A673 (cell line): ENCODE measurements at regions of chr14 and their contacts with region 1.

Region 1: DNA sequence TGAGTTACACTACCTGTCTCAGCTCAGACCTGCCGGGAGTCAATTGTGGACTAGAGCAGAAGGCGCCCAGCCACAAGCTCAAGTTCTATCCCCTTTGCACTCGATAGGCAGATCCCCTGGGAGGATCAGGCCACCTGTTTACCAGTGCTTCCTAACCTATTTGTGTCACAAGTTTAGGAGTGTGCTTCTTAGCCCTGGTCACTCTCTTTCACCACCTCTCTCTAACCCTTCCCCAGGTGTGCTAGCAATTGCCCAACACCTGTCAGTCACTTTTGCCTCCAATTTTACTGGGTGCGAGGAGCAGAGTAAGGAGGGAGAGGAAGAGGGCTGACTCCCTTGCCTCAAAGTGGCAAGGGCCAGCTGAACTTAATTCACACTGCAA is 749 bp upstream of the NAA30 start:
- DNase-seq: no peak
- H3K4me3 ChIP-seq: peak overlapping the region; percentile 87
- H3K27ac ChIP-seq: peak overlapping the region; percentile 87
- H3K4me1 ChIP-seq: peaks cover 15% of the 10 kb centered on the region
- H3K27me3 ChIP-seq: no peaks in the 10 kb centered on the region
- CTCF ChIP-seq: no peak

Region 2: DNA sequence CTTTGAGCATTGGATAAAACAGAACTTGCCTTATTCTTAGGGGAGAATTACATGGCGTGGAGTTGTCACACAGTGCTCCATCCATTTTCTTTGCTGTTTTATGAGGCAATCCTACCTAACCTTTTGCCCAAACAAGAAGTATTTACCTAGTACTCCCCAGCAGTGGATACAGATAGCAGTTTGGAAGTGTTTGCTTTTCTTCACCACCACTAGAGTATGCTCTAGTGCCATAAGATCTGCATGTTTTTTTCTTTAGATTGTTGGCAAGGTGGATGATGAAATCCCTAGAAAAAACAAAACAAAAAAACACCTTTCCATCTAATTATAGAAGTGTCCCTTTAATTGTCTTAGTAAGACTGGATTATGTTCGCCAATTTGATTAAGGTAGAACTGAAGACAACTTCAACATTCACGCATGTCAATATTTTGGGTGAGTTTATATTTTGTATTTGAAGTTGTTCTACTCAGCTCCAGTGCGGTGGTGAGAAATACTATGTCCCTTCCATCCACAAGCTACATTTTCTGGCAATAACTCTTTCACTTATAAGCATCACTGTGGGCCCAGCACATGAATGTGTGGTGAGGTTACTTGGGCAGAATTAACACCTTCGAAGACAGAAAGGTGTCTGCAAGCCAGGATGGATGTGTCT is 833.6 kb before region 1 on chr14:
- CTCF ChIA-PET with region 1: no interaction called
- POLR2A ChIA-PET with region 1: no interaction called
- intact Hi-C with region 1: no loop called
- DNase-seq: peak; percentile 81
- H3K4me3 ChIP-seq: no peak overlapping the region
- H3K27ac ChIP-seq: peak overlapping the region; percentile 48
- H3K4me1 ChIP-seq: peaks cover 44% of the 10 kb centered on the region
- H3K27me3 ChIP-seq: no peaks in the 10 kb centered on the region
- CTCF ChIP-seq: peak; percentile 85

Region 3: GRCh38 chr14:57182760-57183503 is 206.7 kb before region 1 on chr14:
- CTCF ChIA-PET with region 1: no interaction called
- POLR2A ChIA-PET with region 1: no interaction called
- intact Hi-C with region 1: loop called (anchors 10 kb)
- DNase-seq: peak; percentile 76
- H3K4me3 ChIP-seq: no peak overlapping the region
- H3K27ac ChIP-seq: no peak overlapping the region
- H3K4me1 ChIP-seq: peaks cover 7% of the 10 kb centered on the region
- H3K27me3 ChIP-seq: no peaks in the 10 kb centered on the region
- CTCF ChIP-seq: peak; percentile 78

Region 4: DNA sequence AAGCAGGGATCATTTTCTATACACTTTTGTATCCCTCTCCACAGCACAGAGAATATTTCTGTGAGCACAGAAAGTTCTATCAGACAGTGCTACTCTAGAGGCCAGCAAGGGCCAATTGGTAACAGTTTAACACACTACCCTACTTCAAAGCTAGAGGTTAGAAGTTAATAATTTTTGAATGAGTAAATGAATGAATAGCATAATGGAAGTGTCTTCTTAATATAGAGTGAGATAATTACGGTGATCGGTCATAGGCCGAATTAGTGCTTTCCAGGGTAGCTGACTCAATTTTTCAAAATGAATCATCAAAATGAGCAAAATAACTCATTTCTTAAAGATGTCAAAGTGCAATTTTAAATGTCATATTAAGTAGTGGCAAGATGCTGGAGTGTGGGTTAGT is 171.0 kb after region 1 on chr14:
- CTCF ChIA-PET with region 1: no interaction called
- POLR2A ChIA-PET with region 1: no interaction called
- intact Hi-C with region 1: no loop called
- DNase-seq: no peak
- H3K4me3 ChIP-seq: no peak overlapping the region
- H3K27ac ChIP-seq: no peak overlapping the region
- H3K4me1 ChIP-seq: no peaks in the 10 kb centered on the region
- H3K27me3 ChIP-seq: no peaks in the 10 kb centered on the region
- CTCF ChIP-seq: no peak